ENCODE measurements at regions of chr9 and their contacts with region 1.

Region 1: DNA sequence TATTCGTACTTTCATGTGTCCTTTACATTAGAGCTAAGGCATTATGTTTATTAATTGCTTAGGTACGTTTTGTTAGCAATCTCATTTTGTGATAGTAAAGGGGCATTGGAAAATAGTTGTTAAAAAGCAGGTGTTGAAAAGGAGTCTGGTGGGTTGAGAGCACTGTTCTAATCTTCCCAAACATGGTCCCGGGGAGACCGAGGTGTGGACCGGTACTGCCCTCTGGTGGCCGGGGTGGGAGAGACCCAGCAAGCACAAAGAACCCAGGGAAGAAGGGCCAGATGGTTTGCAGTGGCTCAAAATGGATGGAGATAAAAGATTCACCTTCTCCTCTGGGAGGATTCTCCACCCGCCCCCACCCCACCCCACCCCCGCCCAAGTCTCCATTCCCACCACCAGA is 26.1 kb downstream of the IDNK start:
- DNase-seq: peak; percentile 72
- H3K4me3 Mint-ChIP-seq: no peak overlapping the region
- H3K27ac Mint-ChIP-seq: no peak overlapping the region
- H3K4me1 Mint-ChIP-seq: peaks cover 5% of the 10 kb centered on the region
- H3K27me3 Mint-ChIP-seq: no peaks in the 10 kb centered on the region

Region 2: GRCh38 chr9:83636813-83637212 is 12.3 kb before region 1 on chr9:
- CTCF ChIA-PET with region 1: interaction called, 11 read pairs
- POLR2A ChIA-PET with region 1: no interaction called
- DNase-seq: no peak
- H3K4me3 Mint-ChIP-seq: no peak overlapping the region
- H3K27ac Mint-ChIP-seq: no peak overlapping the region
- H3K4me1 Mint-ChIP-seq: no peaks in the 10 kb centered on the region
- H3K27me3 Mint-ChIP-seq: no peaks in the 10 kb centered on the region

Measured in activated CD4-positive, alpha-beta T cell treated with anti-CD3 and anti-CD28 coated beads, Interleukin-2, amount 10 ng/mL, durations not matched to agents 7 days and 5 days (primary cell).